CD8-positive, alpha-beta T cell (primary cell): ENCODE measurements at regions of chr15 and their contacts with region 1.

Region 1: DNA sequence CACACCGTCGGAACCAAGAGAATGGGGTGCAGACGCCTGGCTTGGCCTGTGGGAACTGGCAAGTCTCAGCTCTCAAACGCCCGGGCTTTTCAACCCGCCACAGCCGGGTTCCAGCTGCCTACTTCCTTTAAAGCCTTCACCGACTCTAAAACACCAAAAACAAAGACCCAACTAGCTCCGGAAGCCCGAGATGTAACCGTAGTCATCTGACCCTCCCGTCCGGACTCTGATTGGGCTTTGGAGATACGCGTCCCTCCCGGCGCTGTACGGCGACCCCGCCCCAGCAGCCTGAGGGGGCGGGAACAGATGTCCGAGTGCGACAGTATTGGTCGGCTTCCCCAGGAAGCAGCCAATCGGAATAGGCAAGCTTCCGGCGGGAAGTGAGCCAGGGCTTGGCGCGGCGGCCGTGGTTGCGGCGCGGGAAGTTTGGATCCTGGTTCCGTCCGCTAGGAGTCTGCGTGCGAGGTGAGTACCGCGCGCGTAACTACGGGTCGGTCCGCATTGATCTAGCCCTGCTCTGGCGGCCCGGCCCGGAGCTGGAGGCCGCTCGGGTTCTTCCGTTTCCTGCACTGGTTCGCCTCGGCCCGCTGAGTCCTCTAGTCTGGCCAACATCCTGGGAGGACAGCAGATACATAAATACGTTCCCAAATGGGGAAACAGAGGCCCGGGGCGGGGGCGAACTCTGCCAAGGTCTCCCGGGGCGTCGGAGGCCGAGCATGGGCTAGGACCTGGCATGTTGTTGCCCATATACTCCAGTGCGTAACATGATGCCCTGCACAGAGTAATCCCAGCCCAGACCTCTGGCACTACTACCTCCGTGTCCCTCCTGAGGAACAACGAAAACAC is at the start of gene BLM:
- DNase-seq: peak; percentile 89 to 98 (median 93)
- ATAC-seq: peak; percentile 99
- H3K4me3 ChIP-seq: peak within 1 kb of the TSS; percentile 82 to 95
- H3K4me3 Mint-ChIP-seq: peak within 1 kb of the TSS; percentile 95
- H3K27ac ChIP-seq: peak within 1 kb of the TSS; percentile 78 to 95
- H3K27ac Mint-ChIP-seq: peak within 1 kb of the TSS; percentile 91
- H3K4me1 ChIP-seq: peaks cover 12% of the 10 kb centered on the region
- H3K4me1 Mint-ChIP-seq: peaks cover 31% of the 10 kb centered on the region
- H3K27me3 ChIP-seq: no peaks in the 10 kb centered on the region
- H3K27me3 Mint-ChIP-seq: no peaks in the 10 kb centered on the region
- CTCF ChIP-seq: peak; percentile 21
- total RNA-seq, gene BLM: 2.5 to 2.6 TPM

Region 2: DNA sequence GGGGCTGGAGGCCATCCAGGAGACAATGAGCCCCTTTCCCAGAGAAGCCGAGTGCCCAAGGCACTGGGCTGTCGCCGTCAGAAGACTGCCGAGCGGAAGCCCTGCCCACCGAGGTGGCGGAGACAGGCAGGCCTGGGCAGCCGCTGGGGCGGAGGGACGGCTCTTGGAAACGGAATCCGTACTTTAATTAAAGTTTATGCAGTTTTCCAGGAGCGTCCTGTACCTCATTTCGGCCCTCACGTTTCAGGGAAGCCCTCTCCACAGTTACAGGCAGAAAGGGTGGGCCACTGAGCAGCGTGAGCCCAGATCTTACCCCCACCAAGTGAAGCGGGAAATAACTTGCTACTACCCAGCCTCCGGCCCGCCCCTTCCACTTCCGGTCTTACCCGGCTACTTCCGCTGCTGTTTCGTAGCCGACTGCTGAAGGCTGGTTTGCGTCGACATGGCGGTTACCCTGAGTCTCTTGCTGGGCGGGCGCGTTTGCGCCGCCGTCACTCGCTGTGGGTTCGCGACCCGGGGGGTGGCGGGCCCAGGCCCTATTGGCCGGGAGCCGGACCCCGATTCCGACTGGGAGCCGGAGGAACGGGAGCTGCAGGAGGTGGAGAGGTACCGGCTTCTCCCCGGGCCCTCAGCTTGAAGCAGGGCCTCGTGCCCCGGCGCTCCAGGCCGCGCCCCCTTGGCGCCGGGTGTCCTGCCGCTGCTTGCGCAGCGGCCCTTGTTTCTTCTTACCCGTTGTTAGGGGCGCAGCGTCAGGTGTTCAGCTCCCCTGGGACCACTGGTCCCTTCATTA is 451.7 kb before region 1 on chr15 and contains the start of gene NGRN:
- CTCF ChIA-PET with region 1: no interaction called
- POLR2A ChIA-PET with region 1: no interaction called
- intact Hi-C with region 1: loop called in 1 of 2 experiments (anchors 1 kb)
- DNase-seq: peak; percentile 84 to 95 (median 93)
- ATAC-seq: peak; percentile 81
- H3K4me3 ChIP-seq: peak within 1 kb of the TSS; percentile 79 to 86
- H3K4me3 Mint-ChIP-seq: peak within 1 kb of the TSS; percentile 94
- H3K27ac ChIP-seq: peak within 1 kb of the TSS; percentile 95 to 98
- H3K27ac Mint-ChIP-seq: peak within 1 kb of the TSS; percentile 98
- H3K4me1 ChIP-seq: peaks cover 43% of the 10 kb centered on the region
- H3K4me1 Mint-ChIP-seq: peaks cover 51% of the 10 kb centered on the region
- H3K27me3 ChIP-seq: no peaks in the 10 kb centered on the region
- H3K27me3 Mint-ChIP-seq: no peaks in the 10 kb centered on the region
- CTCF ChIP-seq: no peak
- total RNA-seq, gene NGRN: 57.8 to 62.0 TPM

Region 3: DNA sequence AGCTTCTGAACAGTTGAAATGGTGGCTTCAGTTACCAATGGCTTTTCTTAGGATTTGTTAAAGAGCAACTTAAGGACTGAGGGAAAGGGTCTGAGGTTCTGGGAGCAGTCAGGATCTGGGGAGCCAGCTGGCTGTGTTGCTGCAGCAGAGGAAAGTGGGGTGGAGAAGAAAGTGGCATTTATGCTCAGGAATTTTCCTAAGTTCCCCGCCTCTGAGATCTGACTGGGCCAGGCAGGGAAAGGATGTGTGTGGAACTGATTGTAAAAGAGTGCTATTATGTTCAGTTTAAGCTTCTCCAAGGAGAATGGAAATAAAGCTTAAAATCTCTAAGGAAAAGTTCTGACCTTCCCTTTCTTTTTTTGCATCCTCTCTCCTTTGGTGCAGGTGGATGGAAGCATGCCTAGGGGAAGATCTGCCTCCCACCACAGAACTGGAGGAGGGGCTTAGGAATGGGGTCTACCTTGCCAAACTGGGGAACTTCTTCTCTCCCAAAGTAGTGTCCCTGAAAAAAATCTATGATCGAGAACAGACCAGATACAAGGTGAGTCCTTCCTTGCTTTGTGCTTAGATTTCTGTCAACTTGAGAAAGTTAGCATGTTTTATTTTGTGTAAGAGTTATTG is 291.4 kb before region 1 on chr15:
- CTCF ChIA-PET with region 1: no interaction called
- POLR2A ChIA-PET with region 1: no interaction called
- intact Hi-C with region 1: no loop called
- DNase-seq: no peak
- ATAC-seq: no peak
- H3K4me3 ChIP-seq: no peak overlapping the region
- H3K4me3 Mint-ChIP-seq: no peak overlapping the region
- H3K27ac ChIP-seq: no peak overlapping the region
- H3K27ac Mint-ChIP-seq: no peak overlapping the region
- H3K4me1 ChIP-seq: peaks cover 6% of the 10 kb centered on the region
- H3K4me1 Mint-ChIP-seq: peaks cover 35% of the 10 kb centered on the region
- H3K27me3 ChIP-seq: no peaks in the 10 kb centered on the region
- H3K27me3 Mint-ChIP-seq: no peaks in the 10 kb centered on the region
- CTCF ChIP-seq: no peak

Region 4: DNA sequence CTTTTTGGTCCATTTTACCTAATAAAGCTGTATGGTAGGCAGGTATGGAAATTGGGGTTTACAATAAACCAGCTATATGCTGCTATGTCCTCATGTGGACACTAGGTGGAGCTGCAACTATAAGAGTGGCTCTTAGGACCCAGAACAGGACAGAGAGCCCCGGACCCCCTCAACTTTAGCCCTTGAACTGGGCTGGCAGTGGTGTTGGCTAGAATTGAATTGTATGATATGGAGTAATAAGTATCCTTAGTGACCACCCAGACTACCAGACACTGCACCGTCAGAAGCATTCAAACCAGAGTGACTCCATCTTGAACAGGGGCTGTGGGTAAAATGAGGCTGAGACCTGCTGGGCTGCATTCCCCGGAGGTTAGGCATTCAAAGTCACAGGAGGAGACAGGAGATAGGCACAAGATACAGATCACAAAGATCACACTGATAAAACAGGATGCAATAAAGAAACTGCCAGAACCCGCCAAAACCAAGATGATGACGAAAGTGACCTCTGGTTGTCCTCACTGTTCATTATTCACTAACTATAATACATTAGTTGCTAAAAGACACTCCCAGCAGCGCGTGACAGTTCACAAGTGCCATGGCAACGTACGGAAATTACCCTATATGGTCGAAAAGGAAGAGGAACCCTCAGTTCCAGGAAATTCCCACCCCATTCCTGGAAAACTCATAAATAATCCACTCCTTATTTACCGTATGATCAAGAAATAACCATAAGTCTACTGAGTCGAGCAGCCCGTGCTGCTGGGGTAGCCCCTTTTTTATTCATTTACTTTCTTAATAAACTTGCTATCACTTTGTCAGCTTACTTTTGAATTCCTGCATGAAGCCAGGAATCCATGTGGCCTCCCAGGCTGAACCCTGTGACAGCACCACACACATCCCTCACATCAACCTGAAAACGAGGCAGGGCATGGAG is 68.8 kb before region 1 on chr15:
- CTCF ChIA-PET with region 1: interaction called, 6 read pairs
- POLR2A ChIA-PET with region 1: interaction called, 3 read pairs
- intact Hi-C with region 1: loop called (anchors 1 to 2 kb)
- DNase-seq: peak in 8 of 9 experiments; percentile 33 to 81 (median 62)
- ATAC-seq: peak; percentile 89
- H3K4me3 ChIP-seq: no peak overlapping the region
- H3K4me3 Mint-ChIP-seq: peak overlapping the region; percentile 12
- H3K27ac ChIP-seq: no peak overlapping the region
- H3K27ac Mint-ChIP-seq: no peak overlapping the region
- H3K4me1 ChIP-seq: peaks cover 24% of the 10 kb centered on the region
- H3K4me1 Mint-ChIP-seq: peaks cover 20% of the 10 kb centered on the region
- H3K27me3 ChIP-seq: no peaks in the 10 kb centered on the region
- H3K27me3 Mint-ChIP-seq: no peaks in the 10 kb centered on the region
- CTCF ChIP-seq: peak; percentile 94

Region 5: DNA sequence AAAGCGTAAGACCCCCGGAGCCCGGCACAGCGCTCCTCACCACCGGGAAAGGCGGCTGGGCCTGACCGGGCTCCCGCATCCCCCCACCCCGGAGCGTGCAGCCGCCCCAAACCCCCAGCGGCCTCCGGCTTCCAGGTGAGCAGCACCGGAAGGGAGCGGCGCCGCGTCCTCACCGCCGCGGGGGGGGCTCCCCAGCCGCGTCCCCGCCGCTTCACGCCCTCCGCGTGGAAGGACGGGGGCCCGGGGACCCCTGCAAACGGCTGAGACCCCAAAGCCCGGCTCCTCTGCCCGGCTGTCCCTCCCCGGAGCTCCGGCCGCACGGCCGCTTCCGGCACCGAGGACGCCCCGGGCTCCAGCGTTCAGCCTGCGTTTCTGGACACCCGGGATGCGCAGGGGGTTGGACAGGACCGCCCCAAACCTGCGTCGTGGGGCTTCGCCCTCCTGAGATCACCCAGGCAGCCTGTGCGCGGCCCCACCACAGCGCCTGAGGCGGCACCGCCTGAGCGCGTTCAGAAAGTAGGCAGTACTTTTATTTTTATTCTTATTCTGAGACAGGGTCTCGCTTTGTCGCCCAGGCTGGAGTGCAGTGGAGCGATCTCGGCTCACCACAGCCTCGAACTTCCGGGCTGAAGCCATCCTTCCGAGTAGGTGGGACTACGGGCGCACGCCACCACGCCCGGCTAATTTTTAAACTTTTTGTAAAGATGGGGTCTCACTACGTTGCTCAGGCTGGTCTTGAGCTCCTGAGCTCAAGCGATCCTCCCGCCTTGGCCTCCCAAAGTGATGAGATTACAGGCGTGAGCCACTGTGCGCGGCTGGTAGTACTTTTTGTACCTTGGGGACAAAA is 51.7 kb before region 1 on chr15:
- CTCF ChIA-PET with region 1: no interaction called
- POLR2A ChIA-PET with region 1: interaction called, 5 read pairs
- intact Hi-C with region 1: loop called (anchors 2 kb)
- DNase-seq: peak in 7 of 9 experiments; percentile 26 to 61 (median 40)
- ATAC-seq: peak; percentile 63
- H3K4me3 ChIP-seq: peak overlapping the region; percentile 55 to 63
- H3K4me3 Mint-ChIP-seq: peak overlapping the region; percentile 81
- H3K27ac ChIP-seq: peak overlapping the region; percentile 43 to 55
- H3K27ac Mint-ChIP-seq: peak overlapping the region; percentile 58
- H3K4me1 ChIP-seq: peaks cover 52% of the 10 kb centered on the region
- H3K4me1 Mint-ChIP-seq: peaks cover 51% of the 10 kb centered on the region
- H3K27me3 ChIP-seq: peaks cover 0 to 17% of the 10 kb centered on the region in 2 experiments
- H3K27me3 Mint-ChIP-seq: peaks cover 3% of the 10 kb centered on the region
- CTCF ChIP-seq: no peak

Region 6: GRCh38 chr15:90869601-90870353 is 152.6 kb after region 1 on chr15:
- CTCF ChIA-PET with region 1: interaction called, 3 read pairs
- POLR2A ChIA-PET with region 1: interaction called, 13 read pairs
- intact Hi-C with region 1: loop called (anchors 2 to 5 kb)
- DNase-seq: peak in 4 of 9 experiments; percentile 33 to 64 (median 51)
- ATAC-seq: peak; percentile 22
- H3K4me3 ChIP-seq: no peak overlapping the region
- H3K4me3 Mint-ChIP-seq: peak overlapping the region; percentile 88
- H3K27ac ChIP-seq: peak overlapping the region in 1 of 2 experiments; percentile 8
- H3K27ac Mint-ChIP-seq: peak overlapping the region; percentile 95
- H3K4me1 ChIP-seq: peaks cover 39% of the 10 kb centered on the region
- H3K4me1 Mint-ChIP-seq: peaks cover 34% of the 10 kb centered on the region
- H3K27me3 ChIP-seq: no peaks in the 10 kb centered on the region
- H3K27me3 Mint-ChIP-seq: no peaks in the 10 kb centered on the region
- CTCF ChIP-seq: no peak

Region 7: GRCh38 chr15:90954712-90955671 is 237.8 kb after region 1 on chr15 and contains the start of gene RCCD1:
- CTCF ChIA-PET with region 1: no interaction called
- POLR2A ChIA-PET with region 1: no interaction called
- intact Hi-C with region 1: no loop called
- DNase-seq: peak; percentile 63 to 94 (median 87)
- ATAC-seq: peak; percentile 94
- H3K4me3 ChIP-seq: peak within 1 kb of the TSS; percentile 87 to 97
- H3K4me3 Mint-ChIP-seq: peak within 1 kb of the TSS; percentile 87
- H3K27ac ChIP-seq: peak within 1 kb of the TSS; percentile 90 to 97
- H3K27ac Mint-ChIP-seq: peak within 1 kb of the TSS; percentile 92
- H3K4me1 ChIP-seq: peaks cover 16% of the 10 kb centered on the region
- H3K4me1 Mint-ChIP-seq: peaks cover 10% of the 10 kb centered on the region
- H3K27me3 ChIP-seq: no peaks in the 10 kb centered on the region
- H3K27me3 Mint-ChIP-seq: no peaks in the 10 kb centered on the region
- CTCF ChIP-seq: no peak
- total RNA-seq, gene RCCD1: 3.9 to 4.1 TPM

Region 8: DNA sequence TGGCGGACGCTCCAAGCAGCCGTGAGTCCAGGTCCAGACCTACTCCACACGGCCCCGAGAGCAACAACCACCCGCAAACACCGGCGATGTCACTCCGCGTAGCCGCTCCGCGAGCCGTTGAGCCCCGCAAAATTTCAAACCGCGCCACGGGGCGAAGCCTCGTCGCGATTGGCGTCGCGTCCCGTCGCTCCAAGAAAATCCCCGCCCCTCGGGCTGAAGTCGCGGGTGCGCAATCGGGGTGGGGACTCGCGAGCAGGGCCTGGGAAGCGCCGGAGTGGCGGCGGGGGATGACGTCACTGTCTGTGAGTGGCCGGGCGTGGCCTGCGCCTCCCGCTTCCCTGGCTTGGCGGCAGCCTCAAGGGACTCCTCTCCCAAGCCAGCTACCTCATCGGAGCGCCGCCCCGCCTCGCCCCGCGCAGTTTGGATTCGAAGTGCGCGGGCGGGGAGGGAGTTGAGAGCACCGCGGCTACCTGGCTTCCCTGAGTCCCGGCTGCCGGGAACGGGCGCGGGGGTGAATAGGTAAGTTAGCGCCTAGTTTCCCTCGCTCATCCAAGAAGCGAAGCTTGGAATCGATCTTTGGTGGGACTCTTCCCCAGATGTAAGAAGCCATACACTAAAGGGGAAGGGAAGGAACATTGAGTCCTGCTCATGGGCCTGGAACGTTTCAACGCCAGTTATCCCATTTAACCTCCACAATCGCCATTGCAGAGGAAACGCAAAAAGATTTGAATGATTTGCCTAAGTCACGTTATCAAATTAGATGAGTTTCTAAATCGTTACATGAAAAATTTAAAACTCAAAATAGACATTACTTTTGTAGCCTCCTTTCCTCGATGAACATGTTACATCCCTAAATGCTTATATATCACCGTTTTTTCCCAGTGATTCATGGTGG is 277.5 kb after region 1 on chr15 and contains the start of gene PRC1:
- CTCF ChIA-PET with region 1: no interaction called
- POLR2A ChIA-PET with region 1: no interaction called
- intact Hi-C with region 1: loop called in 1 of 2 experiments (anchors 10 kb)
- DNase-seq: peak; percentile 92 to 99 (median 97)
- ATAC-seq: peak; percentile 96
- H3K4me3 ChIP-seq: peak within 1 kb of the TSS; percentile 78 to 95
- H3K4me3 Mint-ChIP-seq: peak within 1 kb of the TSS; percentile 99
- H3K27ac ChIP-seq: peak within 1 kb of the TSS; percentile 81 to 94
- H3K27ac Mint-ChIP-seq: peak within 1 kb of the TSS; percentile 97
- H3K4me1 ChIP-seq: peaks cover 13% of the 10 kb centered on the region
- H3K4me1 Mint-ChIP-seq: peaks cover 19% of the 10 kb centered on the region
- H3K27me3 ChIP-seq: no peaks in the 10 kb centered on the region
- H3K27me3 Mint-ChIP-seq: no peaks in the 10 kb centered on the region
- CTCF ChIP-seq: no peak
- total RNA-seq, gene PRC1: 24.6 to 31.3 TPM